HEK293 (cell line): ENCODE measurements at regions of chr11 and their contacts with region 1.

Region 1: GRCh38 chr11:13502492-13502891 is 6.7 kb upstream of the PTH start:
- H3K4me3 ChIP-seq: no peak overlapping the region
- H3K27ac ChIP-seq: no peak overlapping the region
- H3K4me1 ChIP-seq: no peaks in the 10 kb centered on the region
- CTCF ChIP-seq: no peak

Region 2: DNA sequence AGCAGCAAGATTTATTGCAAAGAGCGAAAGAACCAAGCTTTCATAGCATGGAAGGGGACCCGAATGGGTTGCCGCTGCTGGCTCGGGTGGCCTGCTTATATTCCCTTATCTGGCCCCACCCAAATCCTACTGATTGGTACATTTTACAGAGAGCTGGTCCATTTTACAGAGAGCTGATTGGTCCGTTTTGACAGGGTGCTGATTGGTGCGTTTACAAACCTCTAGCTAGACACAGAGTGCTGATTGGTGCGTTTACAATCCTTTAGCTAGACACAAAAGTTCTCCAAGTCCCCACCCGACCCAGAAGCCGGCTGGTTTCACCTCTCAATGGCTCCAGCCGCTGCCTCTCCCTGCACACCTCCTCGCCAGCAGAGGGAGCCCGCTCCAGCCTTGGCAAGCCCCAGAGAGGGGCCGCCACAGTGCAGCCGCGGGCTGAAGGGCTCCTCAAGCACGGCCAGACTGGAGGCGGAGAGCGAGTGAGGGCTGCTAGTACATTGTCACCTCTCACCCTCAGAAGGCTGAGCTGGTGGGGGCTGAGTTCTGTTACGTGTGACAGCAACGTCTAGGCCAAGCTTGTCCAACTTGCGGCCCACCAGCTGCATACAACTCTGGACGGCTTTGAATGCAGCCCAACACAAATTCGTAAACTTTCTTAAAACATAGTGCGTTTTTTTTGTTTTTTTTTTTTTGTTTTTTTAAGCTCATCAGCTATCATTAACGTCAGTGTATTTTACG is 15.4 kb before region 1 on chr11:
- CTCF ChIA-PET with region 1: interaction called, 12 read pairs
- POLR2A ChIA-PET with region 1: no interaction called
- H3K4me3 ChIP-seq: no peak overlapping the region
- H3K27ac ChIP-seq: no peak overlapping the region
- H3K4me1 ChIP-seq: no peaks in the 10 kb centered on the region
- CTCF ChIP-seq: no peak

Region 3: DNA sequence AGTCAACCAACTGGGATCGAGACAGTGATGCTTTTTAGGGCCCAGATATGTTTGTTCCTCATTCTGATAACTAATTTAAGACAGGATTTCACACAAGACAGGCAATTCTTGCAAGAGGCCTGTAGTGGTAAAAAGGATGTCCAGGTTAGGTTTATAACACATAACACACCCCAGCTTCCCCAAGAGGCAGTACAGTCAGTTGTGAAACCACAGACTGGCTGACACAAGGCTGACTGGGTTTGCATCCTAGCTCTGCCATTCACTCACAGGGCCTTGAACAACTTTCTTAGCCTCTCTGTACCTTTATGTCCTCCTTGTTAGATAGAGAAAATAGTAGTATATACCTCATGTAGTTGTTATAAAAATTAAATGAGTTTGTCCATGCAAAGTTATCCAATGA is 48.3 kb after region 1 on chr11:
- CTCF ChIA-PET with region 1: no interaction called
- POLR2A ChIA-PET with region 1: no interaction called
- H3K4me3 ChIP-seq: no peak overlapping the region
- H3K27ac ChIP-seq: no peak overlapping the region
- H3K4me1 ChIP-seq: no peaks in the 10 kb centered on the region
- CTCF ChIP-seq: no peak

Region 4: GRCh38 chr11:13644997-13645687 is 142.7 kb after region 1 on chr11:
- CTCF ChIA-PET with region 1: no interaction called
- POLR2A ChIA-PET with region 1: no interaction called
- H3K4me3 ChIP-seq: no peak overlapping the region
- H3K27ac ChIP-seq: no peak overlapping the region
- H3K4me1 ChIP-seq: no peaks in the 10 kb centered on the region
- CTCF ChIP-seq: no peak